PC-9 (cell line): ENCODE measurements at regions of chr19 and their contacts with region 1.

Region 1: DNA sequence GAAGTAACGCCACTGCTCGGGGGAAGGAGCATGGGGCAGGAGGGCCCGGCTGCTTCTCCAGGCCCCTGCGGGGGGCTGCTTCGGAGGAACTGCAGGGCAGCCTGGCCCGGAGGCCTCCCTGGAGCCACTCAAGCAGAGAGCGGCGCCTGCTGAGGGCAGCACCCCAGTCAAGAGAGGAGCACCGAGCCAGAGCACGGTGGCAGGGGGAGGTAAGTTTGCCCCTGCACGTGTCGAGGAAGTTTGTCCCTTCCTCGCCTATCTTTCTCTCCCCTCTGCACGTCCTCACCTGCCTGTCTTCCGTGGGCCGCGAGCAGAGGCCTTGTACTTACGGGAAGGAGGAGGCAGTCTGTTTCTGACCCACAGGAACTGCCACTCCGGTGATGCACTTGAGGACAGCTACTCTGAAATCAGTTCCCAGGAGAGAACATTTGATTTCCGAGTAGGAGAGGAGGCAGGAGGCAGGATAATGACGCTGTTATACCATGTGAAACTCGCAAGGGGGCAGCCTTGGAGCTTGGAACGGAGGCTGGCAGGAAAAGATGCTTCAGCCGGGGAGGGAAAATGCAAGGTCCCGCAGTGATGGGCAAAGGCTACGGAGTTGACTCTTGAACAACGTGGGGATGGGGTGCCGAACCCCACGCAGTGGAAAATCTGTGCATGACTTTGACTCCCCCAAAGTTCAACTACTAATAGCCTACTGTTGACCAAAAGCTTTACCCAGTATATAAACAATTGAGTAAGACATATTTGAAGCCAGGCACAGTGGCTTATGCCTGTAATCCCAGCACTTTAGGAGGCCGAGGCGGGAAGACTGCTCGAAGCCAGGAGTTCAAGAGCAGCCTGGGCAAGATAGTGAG is 5.0 kb downstream of the FFAR1 start:
- DNase-seq: peak; percentile 66 to 71
- H3K4me3 ChIP-seq: no peak overlapping the region
- H3K27ac ChIP-seq: no peak overlapping the region
- H3K4me1 ChIP-seq: no peaks in the 10 kb centered on the region
- H3K27me3 ChIP-seq: no peaks in the 10 kb centered on the region
- CTCF ChIP-seq: peak; percentile 93

Region 2: DNA sequence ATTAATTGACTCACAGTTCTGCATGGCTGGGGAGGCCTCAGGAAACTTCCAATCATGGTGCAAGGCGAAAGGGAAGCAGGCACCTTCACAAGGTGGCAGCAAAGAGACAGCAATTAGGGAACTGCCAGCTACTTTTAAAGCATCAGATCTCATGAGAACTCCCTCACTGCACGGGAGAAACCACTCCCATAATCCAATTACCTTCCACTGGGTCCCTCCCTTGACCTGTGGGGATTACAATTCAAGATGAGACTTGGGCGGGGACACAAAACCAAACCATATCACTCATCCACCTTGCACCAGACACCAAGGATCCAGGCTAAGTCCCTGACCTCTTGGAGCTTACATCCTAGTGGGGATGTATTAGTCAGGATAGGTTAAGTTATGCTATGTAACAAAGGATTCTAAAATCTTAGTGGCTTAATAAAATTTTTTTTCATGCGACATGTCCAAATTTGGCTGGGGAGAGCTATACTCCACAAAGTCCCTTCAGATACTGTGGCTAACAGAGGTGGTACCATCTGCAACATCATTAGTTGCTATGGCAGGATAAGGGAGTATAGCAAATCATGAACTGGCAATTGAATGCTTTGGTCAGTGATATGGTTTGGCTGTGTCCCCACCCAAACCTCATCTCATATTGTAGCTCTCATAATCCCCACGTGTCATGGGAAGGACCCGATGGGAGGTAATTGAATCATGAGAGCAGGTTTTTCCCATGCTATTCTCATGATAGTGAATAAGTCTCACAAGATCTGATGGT is 115.9 kb before region 1 on chr19:
- CTCF ChIA-PET with region 1: no interaction called
- POLR2A ChIA-PET with region 1: no interaction called
- intact Hi-C with region 1: no loop called
- DNase-seq: no peak
- H3K4me3 ChIP-seq: no peak overlapping the region
- H3K27ac ChIP-seq: no peak overlapping the region
- H3K4me1 ChIP-seq: no peaks in the 10 kb centered on the region
- H3K27me3 ChIP-seq: no peaks in the 10 kb centered on the region
- CTCF ChIP-seq: no peak

Region 3: GRCh38 chr19:35269421-35270117 is 83.1 kb before region 1 on chr19:
- CTCF ChIA-PET with region 1: interaction called, 4 read pairs
- POLR2A ChIA-PET with region 1: no interaction called
- intact Hi-C with region 1: loop called (anchors 1 kb)
- DNase-seq: peak; percentile 68 to 93
- H3K4me3 ChIP-seq: peak overlapping the region; percentile 66
- H3K27ac ChIP-seq: peak overlapping the region; percentile 47; the same call in 1 of the 2 replicates
- H3K4me1 ChIP-seq: peaks cover 14% of the 10 kb centered on the region; the same call in 1 of the 2 replicates
- H3K27me3 ChIP-seq: no peaks in the 10 kb centered on the region
- CTCF ChIP-seq: peak; percentile 70

Region 4: GRCh38 chr19:35306473-35307246 is 46.0 kb before region 1 on chr19:
- CTCF ChIA-PET with region 1: no interaction called
- POLR2A ChIA-PET with region 1: no interaction called
- intact Hi-C with region 1: loop called (anchors 2 kb)
- DNase-seq: peak; percentile 50 to 51
- H3K4me3 ChIP-seq: no peak overlapping the region
- H3K27ac ChIP-seq: no peak overlapping the region
- H3K4me1 ChIP-seq: peaks cover 39% of the 10 kb centered on the region
- H3K27me3 ChIP-seq: no peaks in the 10 kb centered on the region
- CTCF ChIP-seq: peak; percentile 61

Region 5: GRCh38 chr19:35468637-35469036 is 116.0 kb after region 1 on chr19:
- CTCF ChIA-PET with region 1: no interaction called
- POLR2A ChIA-PET with region 1: no interaction called
- intact Hi-C with region 1: loop called (anchors 1 kb)
- DNase-seq: peak; percentile 38 to 55
- H3K4me3 ChIP-seq: no peak overlapping the region
- H3K27ac ChIP-seq: no peak overlapping the region
- H3K4me1 ChIP-seq: no peaks in the 10 kb centered on the region
- H3K27me3 ChIP-seq: no peaks in the 10 kb centered on the region
- CTCF ChIP-seq: peak; percentile 79

Region 6: DNA sequence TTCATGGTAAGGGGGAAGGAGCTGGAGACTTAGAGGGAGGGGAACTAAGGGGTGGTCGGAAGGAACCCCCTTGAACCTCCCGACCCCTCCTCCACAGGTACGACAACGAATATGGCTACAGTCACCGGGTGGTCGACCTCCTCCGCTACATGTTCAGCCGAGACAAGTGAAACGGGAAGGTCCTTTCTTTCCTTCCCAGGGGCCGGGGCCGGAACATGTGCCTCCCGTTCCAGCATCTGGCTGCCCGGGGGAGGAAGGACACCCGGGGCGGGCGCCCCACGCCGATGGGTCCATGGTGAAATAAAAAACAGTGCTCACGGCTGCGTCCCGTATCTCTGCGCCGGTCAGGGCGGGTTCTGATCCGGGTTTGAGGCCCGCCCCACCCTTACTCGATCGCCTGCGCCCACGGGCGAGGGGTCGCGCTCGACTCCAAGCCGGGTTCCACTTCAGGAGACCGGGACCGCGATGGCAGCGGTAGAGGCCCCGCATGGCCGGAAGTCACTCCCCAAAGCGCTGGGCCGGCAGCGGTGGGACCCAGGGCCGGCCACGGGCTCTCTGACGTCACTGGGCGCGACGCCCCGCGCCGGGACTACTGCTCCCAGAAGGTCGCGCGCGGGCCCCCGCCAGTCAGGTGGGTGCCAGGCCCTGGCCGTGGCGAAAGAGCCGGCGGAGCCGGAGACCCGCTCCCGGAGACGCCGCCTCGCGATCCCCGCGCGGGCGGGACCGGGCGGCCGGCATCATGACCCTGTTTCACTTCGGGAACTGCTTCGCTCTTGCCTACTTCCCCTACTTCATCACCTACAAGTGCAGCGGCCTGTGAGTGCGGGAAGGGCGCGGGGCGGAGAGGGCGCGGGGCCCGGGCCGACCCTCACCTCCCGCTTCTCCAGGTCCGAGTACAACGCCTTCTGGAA is 192.6 kb after region 1 on chr19 and contains the start of gene TMEM147:
- CTCF ChIA-PET with region 1: no interaction called
- POLR2A ChIA-PET with region 1: no interaction called
- intact Hi-C with region 1: loop called (anchors 2 kb)
- DNase-seq: peak; percentile 66 to 90
- H3K4me3 ChIP-seq: peak within 1 kb of the TSS; percentile 100
- H3K27ac ChIP-seq: peak within 1 kb of the TSS; percentile 59
- H3K4me1 ChIP-seq: peaks cover 14% of the 10 kb centered on the region
- H3K27me3 ChIP-seq: no peaks in the 10 kb centered on the region
- CTCF ChIP-seq: no peak
- total RNA-seq, gene TMEM147: 82.6 and 95.9 TPM in 2 replicates